ENCODE measurements at regions of chr2 and their contacts with region 1.

Region 1: GRCh38 chr2:203484266-203485112 is 50.6 kb downstream of the RAPH1 start:
- DNase-seq: peak; percentile 39 to 60 (median 40)
- ATAC-seq: peak; percentile 64
- H3K4me3 ChIP-seq: no peak overlapping the region
- H3K27ac ChIP-seq: no peak overlapping the region
- H3K4me1 ChIP-seq: no peaks in the 10 kb centered on the region
- H3K27me3 ChIP-seq: no peaks in the 10 kb centered on the region
- CTCF ChIP-seq: peak; percentile 33 to 88 (median 75)
- POLR2A ChIP-seq: no peak

Region 2: GRCh38 chr2:202982779-202983491 is 501.6 kb before region 1 on chr2:
- intact Hi-C with region 1: no loop called
- DNase-seq: no peak
- ATAC-seq: no peak
- H3K4me3 ChIP-seq: no peak overlapping the region
- H3K27ac ChIP-seq: no peak overlapping the region
- H3K4me1 ChIP-seq: no peaks in the 10 kb centered on the region
- H3K27me3 ChIP-seq: no peaks in the 10 kb centered on the region
- CTCF ChIP-seq: no peak
- POLR2A ChIP-seq: no peak

Region 3: DNA sequence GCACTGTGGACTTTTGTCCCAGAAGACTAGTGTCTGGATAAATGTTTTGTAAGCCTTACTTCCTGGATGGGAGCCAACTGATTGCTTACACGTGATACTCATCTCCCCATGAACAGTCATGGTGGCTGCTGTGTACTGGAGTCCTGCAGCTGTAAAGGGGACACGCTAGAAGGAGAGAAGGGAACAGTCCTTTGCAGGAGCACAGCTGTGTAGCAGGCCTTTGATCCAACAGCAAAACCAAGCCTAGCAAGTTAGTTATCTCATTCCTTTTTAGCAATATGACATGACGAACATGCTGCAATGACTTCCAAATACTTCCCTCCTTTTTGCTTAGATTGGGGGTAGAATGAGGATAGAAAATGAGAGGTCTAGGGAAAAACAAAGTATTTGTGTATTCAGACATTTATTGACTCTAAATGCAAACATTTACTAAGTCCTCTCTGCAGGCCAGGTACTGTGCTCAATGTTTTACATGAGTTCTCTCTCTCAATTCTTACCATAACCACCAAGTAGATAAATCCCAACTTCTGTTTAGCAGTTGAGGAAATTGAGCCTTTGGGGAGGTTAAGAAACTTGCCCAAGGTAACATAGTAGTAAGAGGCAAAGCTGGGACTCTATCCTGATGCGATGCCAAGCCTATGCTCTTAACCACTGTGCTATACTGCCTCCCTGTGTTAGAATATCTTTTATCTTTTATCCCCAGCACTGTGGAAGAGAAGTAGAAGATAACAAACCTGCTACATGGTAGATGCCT is 166.5 kb after region 1 on chr2:
- intact Hi-C with region 1: loop called (anchors 10 kb)
- DNase-seq: peak; percentile 49 to 69 (median 69)
- ATAC-seq: peak; percentile 70
- H3K4me3 ChIP-seq: no peak overlapping the region
- H3K27ac ChIP-seq: peak overlapping the region; percentile 27 to 83 (median 52)
- H3K4me1 ChIP-seq: peaks cover 38% of the 10 kb centered on the region
- H3K27me3 ChIP-seq: no peaks in the 10 kb centered on the region
- CTCF ChIP-seq: peak in 6 of 7 experiments; percentile 23 to 65 (median 58)
- POLR2A ChIP-seq: no peak

Region 4: DNA sequence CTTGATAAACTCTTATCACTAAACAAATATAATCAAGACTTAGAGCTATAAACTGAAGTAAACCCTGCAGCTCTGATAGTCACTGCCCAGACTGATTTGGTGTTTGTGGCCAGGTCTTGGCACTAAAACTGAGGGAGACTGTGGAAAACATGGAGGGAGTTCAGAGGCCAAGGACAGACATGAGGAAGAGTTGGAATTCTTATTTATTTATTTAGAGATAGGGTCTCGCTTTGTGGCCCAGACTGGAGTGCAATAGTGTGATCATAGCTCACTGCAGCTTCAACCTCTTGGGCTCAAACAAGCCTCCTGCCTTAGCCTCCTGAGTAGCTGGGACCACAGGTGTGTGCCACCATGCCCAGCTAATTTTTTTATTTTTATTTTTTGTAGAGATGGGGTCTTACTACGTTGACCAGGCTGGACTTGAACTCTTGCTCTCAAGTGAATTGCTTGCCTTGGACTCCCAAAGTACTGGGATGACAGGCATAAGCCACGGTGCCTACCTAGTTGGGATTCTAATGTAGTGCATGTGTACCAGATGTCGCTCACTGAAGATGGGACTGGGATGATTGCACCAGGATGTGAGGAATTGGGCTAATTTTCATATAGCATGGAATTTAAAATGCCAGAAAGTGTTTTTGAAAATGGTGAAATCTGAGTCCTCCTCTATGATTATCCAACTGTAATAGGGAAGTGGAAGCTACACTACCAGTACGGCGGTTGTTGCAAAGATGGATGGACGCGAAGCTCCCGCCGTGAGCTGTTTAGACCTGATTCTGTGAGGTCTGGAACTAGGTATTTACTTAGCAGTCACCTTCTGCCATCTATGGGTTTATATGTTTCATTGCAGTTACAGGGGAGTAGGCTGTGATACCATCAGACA is 330.4 kb after region 1 on chr2:
- intact Hi-C with region 1: loop called (anchors 10 kb)
- DNase-seq: peak; percentile 37 to 59 (median 46)
- ATAC-seq: peak; percentile 80
- H3K4me3 ChIP-seq: no peak overlapping the region
- H3K27ac ChIP-seq: peak overlapping the region in 1 of 4 donors; percentile 30
- H3K4me1 ChIP-seq: no peaks in the 10 kb centered on the region
- H3K27me3 ChIP-seq: no peaks in the 10 kb centered on the region
- CTCF ChIP-seq: peak; percentile 18 to 91 (median 81)
- POLR2A ChIP-seq: no peak

Measured in body of pancreas (tissue), 4 donors.